Uterus (tissue), 4 donors: ENCODE measurements at regions of chr1 and their contacts with region 1.

Region 1: DNA sequence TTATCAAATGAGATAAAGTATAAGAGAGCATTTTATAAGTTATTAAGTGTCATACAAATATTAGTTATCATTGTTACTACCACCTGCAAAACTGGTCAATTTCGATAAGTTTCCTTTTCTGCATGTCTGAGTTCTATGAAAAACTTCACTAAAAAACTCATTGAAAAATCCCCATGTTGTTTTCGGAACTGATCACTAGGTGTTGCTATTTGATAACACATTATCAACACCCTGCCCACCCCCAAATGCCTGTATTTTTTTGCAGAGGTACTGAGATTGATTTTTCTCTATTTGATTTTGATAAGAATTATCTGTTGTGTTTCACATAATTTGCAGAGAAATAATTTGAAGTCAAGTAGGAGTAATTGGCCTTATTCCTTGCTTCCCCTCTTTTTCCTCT is 22.1 kb upstream of the DISP1 start:
- DNase-seq: no peak
- H3K4me3 ChIP-seq: no peak overlapping the region
- H3K27ac ChIP-seq: no peak overlapping the region
- H3K4me1 ChIP-seq: no peaks in the 10 kb centered on the region
- H3K27me3 ChIP-seq: no peaks in the 10 kb centered on the region
- CTCF ChIP-seq: peak; percentile 59 to 78 (median 70)
- POLR2A ChIP-seq: no peak

Region 2: GRCh38 chr1:222814536-222815439 is 22.0 kb after region 1 on chr1 and contains the start of gene DISP1:
- intact Hi-C with region 1: no loop called
- DNase-seq: peak; percentile 84 to 86
- H3K4me3 ChIP-seq: peak within 1 kb of the TSS; percentile 67 to 76
- H3K27ac ChIP-seq: peak within 1 kb of the TSS; percentile 92 to 96
- H3K4me1 ChIP-seq: peaks cover 0 to 4% of the 10 kb centered on the region in 2 donors
- H3K27me3 ChIP-seq: no peaks in the 10 kb centered on the region
- CTCF ChIP-seq: peak in 1 of 4 experiments; percentile 1
- POLR2A ChIP-seq: peak; percentile 38 to 59
- total RNA-seq, gene DISP1: 10.0 to 19.5 (median 16.0) TPM

Region 3: GRCh38 chr1:223081181-223081994 is 288.6 kb after region 1 on chr1:
- intact Hi-C with region 1: loop called (anchors 10 kb)
- DNase-seq: peak; percentile 80 to 82
- H3K4me3 ChIP-seq: peak overlapping the region in 1 of 2 donors; percentile 35
- H3K27ac ChIP-seq: peak overlapping the region; percentile 55 to 61
- H3K4me1 ChIP-seq: no peaks in the 10 kb centered on the region
- H3K27me3 ChIP-seq: no peaks in the 10 kb centered on the region
- CTCF ChIP-seq: peak; percentile 94 to 97 (median 96)
- POLR2A ChIP-seq: peak in 1 of 2 donors; percentile 22

Region 4: DNA sequence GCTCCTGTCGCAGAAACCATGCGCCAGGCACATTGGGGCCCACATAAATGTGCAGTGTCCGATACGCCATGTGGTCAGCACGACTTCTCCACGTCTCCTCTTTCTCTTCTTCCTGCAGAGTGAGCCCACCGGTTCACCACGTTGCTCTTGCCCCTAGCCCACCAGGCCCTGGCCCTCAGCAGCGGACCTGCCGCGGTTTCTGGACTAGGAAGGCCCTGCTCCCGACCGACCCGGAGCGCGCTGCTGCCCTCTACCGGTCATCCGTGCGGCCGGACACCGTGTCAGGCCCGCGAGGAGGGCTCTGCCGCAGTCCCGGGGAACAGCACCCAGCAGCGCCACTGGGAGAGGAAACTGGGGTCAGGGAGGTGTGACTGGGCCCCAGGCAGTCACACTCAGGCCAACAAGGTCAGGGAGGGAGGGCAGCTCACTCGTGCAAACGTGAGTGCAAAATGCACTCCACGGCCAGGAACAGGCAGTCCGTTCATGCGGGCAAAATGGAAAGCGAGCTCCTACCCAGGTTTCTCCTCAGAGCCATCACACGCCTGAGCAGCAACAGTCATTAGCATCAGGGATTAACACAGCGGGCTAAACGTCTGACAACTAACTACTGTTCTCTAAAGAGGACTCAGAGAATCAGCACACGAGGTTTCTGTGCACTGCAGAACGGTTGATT is 336.6 kb after region 1 on chr1:
- intact Hi-C with region 1: loop called (anchors 10 kb)
- DNase-seq: peak; percentile 64 to 76
- H3K4me3 ChIP-seq: no peak overlapping the region
- H3K27ac ChIP-seq: no peak overlapping the region
- H3K4me1 ChIP-seq: peaks cover 0 to 4% of the 10 kb centered on the region in 2 donors
- H3K27me3 ChIP-seq: no peaks in the 10 kb centered on the region
- CTCF ChIP-seq: peak; percentile 71 to 91 (median 80)
- POLR2A ChIP-seq: no peak